ENCODE measurements at regions of chr9 and their contacts with region 1.

Region 1: DNA sequence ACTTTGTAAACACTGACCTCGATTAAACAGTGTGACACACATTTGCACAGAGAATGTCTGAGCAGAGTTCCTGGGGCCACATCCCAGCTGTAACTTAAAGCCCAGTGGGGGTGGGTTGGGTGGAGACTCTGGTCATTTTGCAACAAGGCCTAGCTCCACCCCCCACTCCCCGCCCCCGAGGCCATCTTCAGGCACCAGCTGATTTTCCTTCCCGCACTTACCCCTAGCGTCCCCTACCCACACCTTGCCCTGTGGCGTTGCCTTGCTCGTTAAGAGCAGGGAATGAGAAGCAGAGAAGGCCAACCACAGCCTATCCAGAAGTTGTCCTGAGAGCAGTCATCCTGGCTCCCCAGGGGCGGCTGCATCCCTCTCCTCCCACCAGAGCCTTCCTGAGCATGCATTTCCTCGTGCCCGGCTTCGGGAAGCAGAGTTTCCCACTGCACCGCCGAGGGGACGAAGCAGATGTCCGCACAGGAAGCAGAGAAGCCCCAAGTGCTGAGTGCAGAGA is 101.7 kb upstream of the SARDH start:
- DNase-seq: no peak
- H3K4me3 ChIP-seq: peak overlapping the region in 1 of 3 donors; percentile 37
- H3K27ac ChIP-seq: peak overlapping the region in 1 of 2 donors; percentile 30
- H3K4me1 ChIP-seq: no peaks in the 10 kb centered on the region
- H3K27me3 ChIP-seq: no peaks in the 10 kb centered on the region
- CTCF ChIP-seq: no peak
- POLR2A ChIP-seq: no peak

Region 2: DNA sequence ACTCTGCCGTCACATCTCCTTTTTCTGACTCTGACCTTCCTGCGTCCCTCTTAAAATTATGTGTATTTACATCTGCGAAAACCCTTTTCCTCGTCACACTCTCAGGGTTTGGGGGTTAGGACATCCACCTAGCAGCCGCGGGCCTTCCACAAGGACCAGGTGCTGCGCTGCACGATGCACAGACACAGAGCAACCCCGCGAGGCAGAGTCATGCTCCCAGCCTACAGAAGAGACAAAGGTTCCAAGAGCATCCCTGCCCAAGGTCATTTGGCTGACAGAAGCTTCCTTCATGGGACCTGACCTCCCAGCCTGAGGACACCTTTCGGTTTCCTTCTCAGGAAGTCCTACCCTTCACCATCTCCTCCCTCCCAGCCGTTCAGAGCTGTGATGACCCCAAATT is 16.9 kb after region 1 on chr9:
- intact Hi-C with region 1: loop called (anchors 1 kb)
- DNase-seq: no peak
- H3K4me3 ChIP-seq: no peak overlapping the region
- H3K27ac ChIP-seq: no peak overlapping the region
- H3K4me1 ChIP-seq: no peaks in the 10 kb centered on the region
- H3K27me3 ChIP-seq: no peaks in the 10 kb centered on the region
- CTCF ChIP-seq: no peak
- POLR2A ChIP-seq: no peak

Region 3: DNA sequence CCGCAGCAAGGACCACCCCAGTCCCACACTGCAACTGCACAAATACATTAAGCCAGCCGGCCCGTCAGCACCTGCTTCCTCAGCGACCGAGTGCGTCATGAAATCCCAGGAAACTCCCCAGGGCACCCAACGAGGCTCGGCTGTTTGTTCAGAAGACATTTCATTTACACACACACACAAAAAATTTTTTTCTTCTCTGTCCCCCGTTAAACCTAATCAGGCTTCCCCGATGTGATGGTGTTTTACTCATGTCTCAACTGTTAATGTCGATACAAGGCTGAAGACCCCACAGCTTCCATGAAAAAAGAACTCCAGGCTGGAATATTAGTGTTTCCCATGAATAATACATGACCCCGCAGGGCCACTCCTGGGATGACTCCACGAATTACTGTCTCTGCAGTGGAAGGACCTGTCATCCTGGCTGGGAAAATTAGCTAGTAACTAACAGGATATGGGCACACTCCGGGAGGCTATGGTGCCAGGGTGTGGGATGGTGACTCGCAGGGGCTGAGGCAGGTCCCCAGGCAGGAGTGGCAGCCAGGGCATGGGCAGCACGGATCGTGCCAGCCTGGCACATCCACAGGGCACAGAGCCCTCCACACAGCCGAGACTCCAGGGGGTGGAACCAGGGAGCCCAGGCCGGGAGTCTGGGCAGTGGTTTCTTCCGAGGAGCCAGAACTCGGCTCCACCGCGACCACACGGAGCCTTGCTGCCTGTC is 49.9 kb after region 1 on chr9:
- intact Hi-C with region 1: loop called (anchors 10 kb)
- DNase-seq: no peak
- H3K4me3 ChIP-seq: no peak overlapping the region
- H3K27ac ChIP-seq: no peak overlapping the region
- H3K4me1 ChIP-seq: no peaks in the 10 kb centered on the region
- H3K27me3 ChIP-seq: no peaks in the 10 kb centered on the region
- CTCF ChIP-seq: no peak
- POLR2A ChIP-seq: no peak

Region 4: GRCh38 chr9:135463140-135463539 is 1623.3 kb after region 1 on chr9:
- intact Hi-C with region 1: loop called (anchors 5 kb)
- DNase-seq: no peak
- H3K4me3 ChIP-seq: no peak overlapping the region
- H3K27ac ChIP-seq: no peak overlapping the region
- H3K4me1 ChIP-seq: no peaks in the 10 kb centered on the region
- H3K27me3 ChIP-seq: peaks cover 0 to 6% of the 10 kb centered on the region in 2 donors
- CTCF ChIP-seq: no peak
- POLR2A ChIP-seq: no peak